A549 (cell line): ENCODE measurements at regions of chr11 and their contacts with region 1.

Region 1: GRCh38 chr11:115314330-115314920 is 189.8 kb downstream of the CADM1 start:
- DNase-seq: no peak
- ATAC-seq: no peak
- H3K4me3 ChIP-seq: no peak overlapping the region
- H3K27ac ChIP-seq: no peak overlapping the region
- H3K4me1 ChIP-seq: no peaks in the 10 kb centered on the region
- CTCF ChIP-seq: no peak
- EP300 ChIP-seq: no peak
- POLR2A ChIP-seq: no peak
- RAD21 ChIP-seq: no peak

Region 2: GRCh38 chr11:115324581-115325432 is 10.4 kb after region 1 on chr11:
- CTCF ChIA-PET with region 1: interaction called, 11 read pairs
- POLR2A ChIA-PET with region 1: no interaction called
- DNase-seq: peak; percentile 33 to 67
- ATAC-seq: peak; percentile 89 to 93
- H3K4me3 ChIP-seq: no peak overlapping the region
- H3K27ac ChIP-seq: no peak overlapping the region
- H3K4me1 ChIP-seq: peaks cover 8% of the 10 kb centered on the region; the same call in 2 of the 3 replicates
- CTCF ChIP-seq: peak; percentile 69
- EP300 ChIP-seq: no peak
- POLR2A ChIP-seq: no peak
- RAD21 ChIP-seq: peak; percentile 78 to 81

Region 3: DNA sequence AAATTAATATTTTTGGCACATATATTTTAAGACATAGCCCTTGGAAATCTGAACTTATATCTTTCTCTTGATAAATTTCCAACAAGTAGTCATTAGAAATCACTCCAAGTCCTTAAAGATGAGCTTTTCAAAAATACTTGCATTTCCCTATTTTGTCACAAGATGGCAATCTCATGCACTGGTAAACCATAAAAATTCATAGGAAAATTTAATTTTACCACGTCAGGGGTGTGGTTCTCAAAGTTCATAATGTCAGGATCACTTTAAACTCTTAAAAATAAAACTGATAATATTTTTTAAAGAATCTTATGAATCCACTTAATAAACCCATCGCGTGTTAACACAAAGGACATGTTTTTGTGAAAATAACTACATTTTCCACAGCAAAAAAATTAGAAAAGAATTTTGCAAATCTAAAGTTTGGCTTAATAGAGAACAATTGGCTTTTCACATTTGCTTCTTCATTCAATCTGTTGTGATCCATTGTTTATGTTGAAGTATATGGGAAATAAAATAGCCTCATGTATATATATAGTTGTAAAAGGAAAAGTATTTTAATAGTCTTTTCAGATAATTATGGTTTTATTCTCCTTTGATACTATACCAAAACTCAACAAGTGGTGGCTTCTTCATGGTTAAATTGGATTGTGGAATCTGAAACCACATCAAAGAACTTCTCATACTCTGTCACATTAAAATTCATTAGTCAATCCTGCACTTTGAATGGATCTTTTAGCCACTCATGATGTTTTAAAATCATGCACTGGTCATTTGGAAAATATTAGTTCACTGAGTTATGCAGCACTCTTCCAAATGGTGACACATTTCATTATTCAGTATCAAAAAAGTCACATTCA is 20.7 kb after region 1 on chr11:
- CTCF ChIA-PET with region 1: no interaction called
- POLR2A ChIA-PET with region 1: no interaction called
- DNase-seq: peak; percentile 6 to 46
- ATAC-seq: no peak
- H3K4me3 ChIP-seq: no peak overlapping the region
- H3K27ac ChIP-seq: no peak overlapping the region
- H3K4me1 ChIP-seq: peaks cover 13% of the 10 kb centered on the region; the same call in 2 of the 3 replicates
- CTCF ChIP-seq: peak; percentile 72
- EP300 ChIP-seq: no peak
- POLR2A ChIP-seq: no peak
- RAD21 ChIP-seq: peak; percentile 70 to 79